ENCODE measurements at regions of chr19 and their contacts with region 1.

Region 1: GRCh38 chr19:6048808-6049405 is 61.4 kb downstream of the RFX2 start:
- DNase-seq: peak; percentile 93
- H3K4me3 ChIP-seq: peak overlapping the region; percentile 18 to 33 (median 20)
- H3K27ac ChIP-seq: peak overlapping the region; percentile 69 to 92 (median 77)
- H3K4me1 ChIP-seq: peaks cover 16 to 56% (median 41%) of the 10 kb centered on the region in 4 donors
- H3K27me3 ChIP-seq: no peaks in the 10 kb centered on the region
- CTCF ChIP-seq: peak; percentile 87 to 90 (median 89)
- EP300 ChIP-seq: no peak
- POLR2A ChIP-seq: no peak

Region 2: DNA sequence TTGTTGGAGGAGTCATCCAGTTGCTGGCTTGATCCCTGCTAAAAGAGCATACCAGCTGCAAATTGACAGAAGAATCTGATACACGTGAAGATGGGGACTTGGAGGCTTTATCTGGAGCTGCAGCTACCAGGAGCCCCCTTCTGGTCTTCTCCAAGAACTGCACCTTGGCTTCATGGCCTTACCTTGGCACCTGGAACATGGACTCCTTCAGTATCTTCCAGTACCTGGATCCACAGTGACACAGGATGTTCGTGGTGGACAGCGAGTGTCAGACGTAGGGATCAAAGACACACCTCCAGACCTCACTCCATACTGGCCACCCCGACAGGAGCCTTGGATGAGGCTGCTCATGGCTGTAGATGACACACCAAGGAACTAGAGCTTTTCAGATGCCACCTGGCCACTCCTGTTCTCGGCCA is 76.7 kb after region 1 on chr19:
- intact Hi-C with region 1: loop called (anchors 1 kb)
- DNase-seq: no peak
- H3K4me3 ChIP-seq: no peak overlapping the region
- H3K27ac ChIP-seq: no peak overlapping the region
- H3K4me1 ChIP-seq: no peaks in the 10 kb centered on the region
- H3K27me3 ChIP-seq: no peaks in the 10 kb centered on the region
- CTCF ChIP-seq: peak; percentile 95 to 98 (median 97)
- EP300 ChIP-seq: no peak
- POLR2A ChIP-seq: no peak

Region 3: GRCh38 chr19:6218491-6219162 is 169.7 kb after region 1 on chr19:
- intact Hi-C with region 1: loop called (anchors 10 kb)
- DNase-seq: peak; percentile 96
- H3K4me3 ChIP-seq: no peak overlapping the region
- H3K27ac ChIP-seq: peak overlapping the region in 3 of 4 donors; percentile 34 to 51 (median 51)
- H3K4me1 ChIP-seq: peaks cover 48 to 82% (median 55%) of the 10 kb centered on the region in 4 donors
- H3K27me3 ChIP-seq: no peaks in the 10 kb centered on the region
- CTCF ChIP-seq: peak in 2 of 3 experiments; percentile 97 to 99
- EP300 ChIP-seq: no peak
- POLR2A ChIP-seq: no peak

Region 4: DNA sequence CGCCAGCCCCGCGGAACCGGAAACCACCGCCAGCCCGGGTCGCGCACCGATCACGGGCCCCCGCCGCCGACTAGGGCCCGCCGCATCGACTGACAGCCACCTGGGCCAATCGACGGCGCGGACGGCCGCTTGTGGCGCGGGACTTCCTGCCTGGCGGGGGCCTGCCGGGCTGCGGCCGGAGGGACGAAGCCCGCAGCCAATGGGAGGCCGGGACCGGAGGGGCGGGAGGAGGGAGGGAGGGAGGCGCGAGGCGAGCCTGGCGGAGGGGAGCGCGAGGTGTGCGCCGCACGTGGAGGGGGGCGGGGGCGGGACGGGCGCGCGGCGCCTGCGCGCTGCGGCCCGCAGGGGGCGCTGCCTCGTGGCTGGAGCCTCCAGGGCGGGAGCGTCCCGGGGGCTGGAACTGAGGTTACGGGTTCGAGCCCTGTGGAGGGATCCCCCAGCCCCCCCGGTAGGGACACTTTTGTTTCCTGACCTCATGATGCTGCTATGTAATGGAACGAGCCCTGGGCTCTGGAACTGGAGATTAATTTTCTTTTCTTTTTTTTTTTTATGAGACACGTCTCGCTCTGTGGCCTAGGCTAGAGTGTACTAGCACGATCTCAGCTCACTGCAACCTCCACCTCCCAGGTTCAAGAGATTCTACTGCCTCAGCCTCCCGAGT is 231.2 kb after region 1 on chr19 and contains the start of gene MLLT1:
- intact Hi-C with region 1: loop called (anchors 10 kb)
- DNase-seq: peak; percentile 99
- H3K4me3 ChIP-seq: peak within 1 kb of the TSS; percentile 83 to 96 (median 88)
- H3K27ac ChIP-seq: peak within 1 kb of the TSS; percentile 86 to 93 (median 89)
- H3K4me1 ChIP-seq: peaks cover 40 to 48% (median 48%) of the 10 kb centered on the region in 4 donors
- H3K27me3 ChIP-seq: no peaks in the 10 kb centered on the region
- CTCF ChIP-seq: peak; percentile 61 to 97 (median 89)
- EP300 ChIP-seq: no peak
- POLR2A ChIP-seq: no peak
- total RNA-seq, gene MLLT1: 21.5 to 46.9 (median 33.4) TPM